Right cardiac atrium (tissue), 5 donors: ENCODE measurements at regions of chr20 and their contacts with region 1.

Region 1: DNA sequence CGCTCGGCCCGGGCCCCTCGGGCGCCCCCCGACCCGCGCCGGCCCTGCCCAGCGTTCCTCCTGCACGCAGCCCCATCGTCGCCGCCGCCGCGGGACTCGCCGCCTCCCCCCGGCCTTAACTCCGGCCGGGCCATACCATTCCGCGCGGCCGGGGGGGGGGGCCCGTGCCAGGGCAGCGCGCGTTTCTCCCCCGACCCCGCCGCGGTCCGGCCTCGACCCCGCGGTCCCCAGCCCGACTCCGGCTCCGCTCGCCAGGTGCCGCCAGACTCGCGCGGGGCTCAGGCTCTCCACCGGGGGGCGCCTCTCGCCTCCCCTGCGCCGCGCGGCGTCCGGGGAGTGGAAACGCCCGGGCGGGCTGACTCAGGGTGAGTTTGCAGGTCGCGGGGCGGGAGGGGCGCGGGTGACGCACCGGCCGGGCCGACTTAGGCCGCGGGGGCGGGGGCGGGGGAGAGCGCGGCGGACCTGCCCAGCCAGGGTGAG is at the start of gene SRXN1:
- DNase-seq: peak; percentile 92 to 96 (median 96)
- ATAC-seq: peak; percentile 94 to 96
- H3K4me3 ChIP-seq: peak within 1 kb of the TSS; percentile 82
- H3K27ac ChIP-seq: peak within 1 kb of the TSS; percentile 96
- H3K4me1 ChIP-seq: peaks cover 9% of the 10 kb centered on the region
- H3K27me3 ChIP-seq: no peaks in the 10 kb centered on the region
- total RNA-seq, gene SRXN1: 41.0 to 50.2 (median 44.1) TPM

Region 2: DNA sequence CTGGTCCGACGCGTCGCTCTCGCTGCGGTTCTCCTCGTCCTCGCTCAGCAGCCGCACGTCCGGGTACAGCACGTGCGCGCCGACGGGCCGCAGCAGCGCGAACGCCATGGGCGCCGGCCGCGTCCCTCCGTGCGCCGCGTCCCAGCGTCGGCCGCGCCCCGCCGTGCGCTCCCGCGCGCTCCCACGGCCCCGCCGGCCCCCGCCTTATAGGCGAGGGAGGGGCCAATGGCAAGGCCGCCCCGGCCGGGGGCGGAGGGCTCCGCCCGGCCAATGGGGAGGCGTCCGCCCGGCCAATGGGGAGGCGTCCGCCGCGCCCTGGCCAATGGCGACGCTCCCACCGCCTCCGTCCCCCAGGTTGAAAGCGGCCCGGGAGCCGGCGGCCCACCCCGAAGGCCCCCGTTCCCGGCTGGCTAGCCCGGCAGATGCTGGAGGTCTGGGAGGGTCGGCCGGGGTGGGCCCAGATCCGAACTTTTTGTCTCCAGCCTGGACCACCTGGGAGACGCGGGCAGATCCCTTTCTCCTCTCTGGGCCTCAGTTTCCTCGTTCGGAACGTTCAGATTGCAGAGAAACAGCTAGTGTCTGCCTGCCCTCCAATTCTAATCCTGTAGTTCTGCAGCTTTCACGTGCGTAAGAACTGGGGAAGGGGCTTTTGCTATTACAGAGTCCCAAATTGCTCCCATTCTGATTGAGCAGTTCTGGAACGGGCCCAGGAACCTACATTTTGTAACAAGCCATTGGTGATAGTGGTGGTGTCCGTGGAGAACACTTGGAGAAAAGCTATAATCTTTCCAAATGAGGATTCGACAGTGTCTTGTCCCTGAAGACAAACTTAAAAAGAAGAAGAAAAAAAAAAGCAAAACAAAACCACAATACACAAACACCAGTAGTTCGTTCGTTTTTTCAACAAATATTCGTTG is 42.8 kb before region 1 on chr20 and contains the start of gene TCF15:
- intact Hi-C with region 1: no loop called
- DNase-seq: peak; percentile 64 to 88 (median 79)
- ATAC-seq: peak; percentile 92 to 96
- H3K4me3 ChIP-seq: peak within 1 kb of the TSS; percentile 69
- H3K27ac ChIP-seq: peak within 1 kb of the TSS; percentile 61
- H3K4me1 ChIP-seq: peaks cover 10% of the 10 kb centered on the region
- H3K27me3 ChIP-seq: no peaks in the 10 kb centered on the region
- total RNA-seq, gene TCF15: 4.0 to 9.3 (median 7.8) TPM

Region 3: DNA sequence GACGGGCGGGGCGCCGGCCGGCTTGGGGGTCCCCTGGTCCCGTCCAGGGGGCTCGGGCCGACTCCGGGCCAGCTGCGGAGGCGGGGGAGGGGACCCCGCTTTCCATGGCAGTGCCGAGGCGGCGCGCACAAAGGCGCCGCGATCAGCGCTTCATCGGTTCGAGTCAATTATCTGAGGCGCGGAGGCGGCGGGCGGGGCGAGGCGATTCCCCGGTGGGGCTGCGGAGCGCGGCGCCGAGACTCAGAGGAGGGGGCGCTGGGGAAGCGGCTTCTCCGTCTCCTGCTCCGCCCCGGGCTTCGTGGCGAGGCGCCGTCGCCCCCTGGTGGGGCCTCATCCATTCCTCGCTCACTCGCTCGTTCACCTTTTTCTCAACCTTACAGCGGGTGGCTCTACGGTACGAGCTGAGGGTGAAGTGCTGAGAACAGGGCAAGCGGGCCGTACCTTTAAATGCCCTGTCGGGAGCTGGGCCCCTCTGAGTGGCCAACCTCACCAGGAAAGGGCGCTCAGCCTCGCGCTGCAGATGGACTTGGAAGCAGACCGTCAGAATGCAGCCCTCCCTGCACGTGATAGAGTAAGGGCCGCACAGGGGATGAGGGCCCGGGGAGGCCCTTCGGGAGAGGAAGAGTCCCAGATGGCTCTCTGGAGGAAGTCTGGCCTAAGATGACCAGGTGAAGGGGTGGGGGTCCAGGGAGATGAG is 75.2 kb after region 1 on chr20:
- intact Hi-C with region 1: loop called (anchors 2 to 10 kb)
- DNase-seq: peak; percentile 45 to 87 (median 76)
- ATAC-seq: peak; percentile 71 to 76
- H3K4me3 ChIP-seq: peak overlapping the region; percentile 65
- H3K27ac ChIP-seq: no peak overlapping the region
- H3K4me1 ChIP-seq: no peaks in the 10 kb centered on the region
- H3K27me3 ChIP-seq: no peaks in the 10 kb centered on the region